OCI-LY7 (cell line): ENCODE measurements at regions of chr2 and their contacts with region 1.

Region 1: GRCh38 chr2:74212702-74213410 is 14.4 kb downstream of the MTHFD2 start:
- DNase-seq: no peak
- H3K4me3 ChIP-seq: no peak overlapping the region
- H3K27ac ChIP-seq: no peak overlapping the region
- H3K4me1 ChIP-seq: no peaks in the 10 kb centered on the region
- CTCF ChIP-seq: no peak

Region 2: GRCh38 chr2:74168739-74169138 is 44.1 kb before region 1 on chr2:
- CTCF ChIA-PET with region 1: no interaction called
- POLR2A ChIA-PET with region 1: no interaction called
- intact Hi-C with region 1: loop called (anchors 5 kb)
- DNase-seq: no peak
- H3K4me3 ChIP-seq: no peak overlapping the region
- H3K27ac ChIP-seq: no peak overlapping the region
- H3K4me1 ChIP-seq: peaks cover 15% of the 10 kb centered on the region
- CTCF ChIP-seq: no peak

Region 3: DNA sequence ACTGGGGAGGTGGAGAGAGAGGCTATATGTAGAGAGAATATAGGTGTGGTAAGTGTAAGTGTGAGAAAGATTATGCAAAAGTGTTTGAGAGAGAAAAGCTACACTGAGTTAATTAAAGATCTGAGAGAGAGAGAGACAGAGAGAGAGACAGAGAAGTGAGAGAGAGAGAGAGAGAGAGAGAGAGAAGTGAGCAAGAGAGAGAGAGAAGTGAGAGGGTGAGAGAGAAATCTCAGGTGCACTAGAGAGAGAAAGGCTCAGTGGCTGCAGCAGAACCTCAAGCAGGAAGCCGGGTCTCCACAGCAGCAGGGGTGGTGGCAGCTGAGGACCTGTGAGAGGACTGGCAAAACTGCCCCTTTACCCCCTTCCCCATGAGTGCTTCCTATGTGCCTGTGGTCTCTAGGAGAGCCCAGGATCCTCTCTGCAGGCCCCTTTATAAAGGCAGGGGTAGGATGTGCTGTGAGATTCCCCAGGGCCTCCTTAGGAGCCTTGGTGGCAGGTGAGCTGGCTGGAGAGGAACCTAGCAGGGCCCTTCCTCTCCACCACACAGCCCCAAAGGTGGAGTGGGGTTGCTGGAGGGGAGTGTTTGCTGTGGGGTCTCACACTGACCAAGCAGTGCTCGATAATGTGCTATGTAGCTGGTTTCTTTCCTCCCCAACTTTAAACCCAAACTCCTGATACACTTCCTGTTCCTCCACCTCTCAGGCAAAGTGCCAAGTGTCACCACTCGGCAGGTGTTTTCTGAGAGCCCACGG is 77.8 kb after region 1 on chr2:
- CTCF ChIA-PET with region 1: no interaction called
- POLR2A ChIA-PET with region 1: no interaction called
- intact Hi-C with region 1: no loop called
- DNase-seq: peak; percentile 87
- H3K4me3 ChIP-seq: peak overlapping the region; percentile 28
- H3K27ac ChIP-seq: peak overlapping the region; percentile 72
- H3K4me1 ChIP-seq: peaks cover 25% of the 10 kb centered on the region
- CTCF ChIP-seq: no peak; the same call in 1 of the 2 replicates

Region 4: DNA sequence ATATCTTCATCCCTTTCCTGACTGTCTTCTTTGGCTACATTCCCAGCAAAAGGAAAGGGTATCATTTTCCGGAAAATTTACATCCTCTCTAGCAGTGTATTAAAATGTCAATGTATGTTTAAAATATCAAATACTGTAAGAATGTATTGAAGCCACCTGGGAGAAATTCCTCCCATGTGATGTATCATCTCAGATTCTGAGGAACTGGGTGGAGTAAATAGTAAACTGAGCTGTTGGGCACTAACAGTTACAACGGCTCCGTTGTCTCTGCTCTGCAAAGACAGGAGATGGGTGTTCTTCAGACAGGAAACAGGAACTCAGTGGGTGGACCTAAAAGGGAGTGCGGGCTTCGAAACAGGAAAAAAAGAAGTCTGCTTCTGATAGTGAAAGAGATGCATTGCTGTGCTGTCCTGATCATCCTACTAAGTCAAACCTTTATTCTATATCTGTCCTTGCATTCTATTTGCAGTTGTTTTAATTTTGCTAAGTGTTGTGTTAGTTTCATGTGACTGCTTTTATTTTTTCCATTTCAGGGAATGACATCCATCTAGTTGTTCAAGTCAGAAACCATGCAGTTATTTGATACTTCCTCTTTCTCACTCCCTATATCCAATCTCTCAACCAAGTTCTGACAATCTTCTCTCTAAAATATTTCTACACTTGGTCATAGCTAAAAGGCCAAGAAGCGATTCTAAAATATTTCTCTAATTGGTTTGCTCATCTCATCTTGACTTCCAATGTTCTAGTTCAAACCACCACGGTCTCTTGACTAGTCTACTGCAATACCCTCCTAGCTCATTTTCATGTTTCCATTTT is 361.1 kb after region 1 on chr2:
- CTCF ChIA-PET with region 1: no interaction called
- POLR2A ChIA-PET with region 1: no interaction called
- intact Hi-C with region 1: no loop called
- DNase-seq: peak; percentile 33
- H3K4me3 ChIP-seq: no peak overlapping the region
- H3K27ac ChIP-seq: no peak overlapping the region
- H3K4me1 ChIP-seq: peaks cover 28% of the 10 kb centered on the region
- CTCF ChIP-seq: no peak